ENCODE measurements at regions of chr22 and their contacts with region 1.

Region 1: DNA sequence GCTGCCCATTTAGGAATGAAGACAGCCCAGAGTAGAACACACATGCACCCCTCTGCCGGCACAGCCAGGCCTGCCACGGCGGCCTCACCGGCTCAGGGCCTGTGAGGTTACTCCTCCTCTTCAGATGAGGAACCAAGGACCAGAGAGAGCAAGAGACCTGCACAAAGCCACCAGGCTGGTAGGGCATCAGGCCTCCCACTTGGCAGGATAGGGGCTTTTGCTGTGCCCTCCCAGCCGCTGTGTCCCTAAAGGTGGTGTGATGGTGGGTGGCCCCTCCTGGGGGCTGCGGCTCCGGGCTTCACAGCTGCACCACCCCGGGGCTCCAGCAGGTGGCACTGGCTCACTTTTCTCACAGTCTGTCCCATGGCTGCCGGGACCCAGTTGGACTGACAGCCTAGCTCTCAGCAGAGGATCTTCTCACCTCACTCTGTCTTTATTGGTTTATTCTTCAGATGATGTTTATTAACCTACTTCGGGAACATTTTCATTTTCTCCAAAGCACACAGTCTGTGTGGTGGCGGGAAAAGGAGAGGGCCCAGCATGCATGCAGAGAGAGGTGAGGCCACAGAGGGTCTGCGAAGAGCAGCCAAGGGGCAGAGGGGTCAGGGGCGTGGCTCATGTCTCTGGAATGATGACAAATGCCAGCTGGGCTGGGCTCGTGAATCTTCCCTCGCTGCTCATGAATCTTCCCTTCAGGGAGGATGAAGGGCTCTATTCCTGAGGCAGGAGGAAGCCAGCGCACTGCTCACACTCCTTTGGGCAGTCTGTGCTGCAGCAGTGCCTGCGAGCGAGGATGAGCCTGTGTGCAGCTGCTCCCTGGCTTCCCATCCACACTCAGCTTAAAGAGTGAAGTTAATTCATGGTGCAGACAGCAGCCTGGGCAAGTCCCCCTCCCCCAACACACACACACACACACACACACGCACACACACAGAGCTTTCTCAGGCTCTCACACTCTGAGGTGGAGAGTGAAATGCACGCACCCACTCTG is 101.1 kb upstream of the PITPNB start:
- DNase-seq: peak; percentile 86
- CTCF ChIP-seq: peak; percentile 90

Region 2: DNA sequence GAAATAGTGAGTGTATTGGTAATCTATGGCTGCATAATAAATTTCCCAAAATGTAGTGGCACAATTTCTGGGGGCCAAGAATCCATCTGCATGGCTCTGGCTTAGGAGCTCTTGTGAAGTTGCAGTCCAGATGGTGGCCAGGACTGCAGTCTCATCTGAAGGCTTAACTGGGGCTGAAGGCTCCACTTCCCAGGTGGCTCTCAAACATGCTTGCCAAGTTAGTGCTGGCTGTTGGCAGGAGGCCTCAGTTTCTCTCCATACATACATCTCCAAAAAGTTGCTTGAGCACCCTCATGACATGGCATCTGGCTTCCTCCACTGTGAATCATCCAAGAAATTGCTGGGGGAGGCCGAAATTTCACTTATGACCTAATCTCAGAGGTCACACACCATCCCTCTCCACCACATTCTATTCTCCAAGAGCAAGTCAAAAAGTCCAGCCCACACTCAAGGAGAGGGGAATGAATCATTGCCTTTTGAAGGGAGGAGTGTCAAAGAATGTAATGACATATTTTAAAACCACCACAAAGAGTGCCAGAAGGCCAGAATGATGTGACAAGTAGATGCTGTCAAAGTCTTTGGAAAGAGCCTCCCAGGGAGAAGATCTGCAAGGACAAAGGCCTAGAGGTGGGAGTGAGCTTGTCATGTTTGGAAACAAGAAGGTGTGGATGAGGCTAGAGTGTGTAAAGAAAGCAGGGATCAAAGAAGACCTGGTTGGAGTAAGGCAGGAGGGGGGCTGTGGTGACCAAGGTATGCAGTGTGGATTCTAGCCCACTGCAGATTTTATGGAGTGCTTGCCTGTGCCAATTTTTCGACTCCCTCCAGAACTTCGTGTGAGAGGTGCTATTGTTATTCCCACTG is 796.6 kb before region 1 on chr22:
- in situ Hi-C with region 1: no loop called
- DNase-seq: no peak
- CTCF ChIP-seq: no peak

Region 3: DNA sequence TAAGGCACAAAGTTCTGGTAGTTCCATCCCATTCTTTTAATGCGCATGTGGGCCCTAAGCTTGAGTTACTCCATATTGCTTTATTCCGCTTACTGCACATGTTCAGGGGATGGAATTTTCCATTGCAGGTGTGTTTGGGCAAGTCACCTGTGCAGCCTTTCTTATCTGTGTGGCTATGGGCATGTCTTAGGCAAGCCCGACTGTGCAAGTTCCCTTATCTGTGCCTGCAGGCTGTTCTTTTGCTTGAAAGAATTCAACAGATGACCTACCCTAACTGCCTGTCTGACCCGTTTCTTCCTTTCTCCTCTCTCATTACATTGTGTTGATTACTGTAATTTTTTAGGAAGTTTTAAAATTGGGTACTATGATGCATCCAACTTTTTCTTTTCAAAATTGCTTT is 295.8 kb after region 1 on chr22:
- in situ Hi-C with region 1: no loop called
- DNase-seq: no peak
- CTCF ChIP-seq: no peak

Region 4: DNA sequence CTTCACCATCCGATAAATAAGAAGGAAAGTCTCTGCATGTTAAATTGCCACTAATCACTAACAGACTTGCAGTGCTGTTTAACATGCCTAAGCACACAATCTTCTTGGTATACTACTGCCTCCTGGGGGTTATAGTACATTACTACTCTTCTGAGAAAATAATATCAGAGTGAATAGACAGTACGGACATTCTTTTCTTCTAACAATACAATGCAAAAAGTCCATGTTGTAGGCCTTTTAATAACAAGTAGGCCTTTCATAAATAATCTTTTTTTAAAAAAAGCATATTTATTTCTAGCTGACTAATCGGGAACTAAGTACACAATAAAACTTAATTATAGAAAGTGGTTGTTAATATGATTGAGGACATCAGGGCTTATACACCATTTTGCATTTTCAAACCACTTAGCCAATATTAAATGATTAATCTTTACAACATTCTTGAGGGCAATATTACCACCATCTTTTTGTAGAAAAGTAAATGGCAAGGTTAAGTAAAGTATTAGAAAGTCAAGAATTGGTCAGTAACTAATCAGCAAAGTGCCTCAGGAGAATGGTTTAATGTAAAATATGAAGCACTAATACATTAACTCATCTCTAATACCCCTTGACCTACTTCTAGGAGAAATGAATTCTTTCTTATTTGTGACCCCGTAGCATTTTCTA is 574.8 kb after region 1 on chr22:
- in situ Hi-C with region 1: loop called (anchors 10 kb)
- DNase-seq: peak; percentile 41
- CTCF ChIP-seq: no peak